GM23248 (cell line): ENCODE measurements at regions of chr1 and their contacts with region 1.

Region 1: DNA sequence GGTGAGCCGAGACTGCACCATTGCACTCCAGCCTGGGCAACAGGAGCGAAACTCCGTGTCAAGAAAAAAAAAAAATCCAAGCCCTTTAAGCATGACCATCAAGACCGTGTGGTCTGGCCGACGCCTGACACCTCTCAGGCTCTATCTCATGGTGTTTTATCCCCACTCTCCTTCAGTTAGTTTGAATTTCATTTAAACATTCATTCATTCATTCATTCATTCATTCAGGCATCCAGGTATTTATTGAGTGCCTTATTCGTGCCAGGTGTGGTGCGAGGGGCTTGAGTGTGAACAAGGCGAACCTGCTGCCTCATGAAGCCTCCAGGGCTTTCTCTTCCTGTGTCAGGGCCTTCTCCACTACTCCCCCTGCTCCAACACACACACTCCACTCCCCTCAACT is 22.6 kb upstream of the OPRD1 start:
- DNase-seq: no peak
- H3K4me3 ChIP-seq: no peak overlapping the region
- H3K27ac ChIP-seq: no peak overlapping the region
- H3K4me1 ChIP-seq: no peaks in the 10 kb centered on the region
- H3K27me3 ChIP-seq: no peaks in the 10 kb centered on the region

Region 2: GRCh38 chr1:28172713-28173150 is 616.7 kb before region 1 on chr1:
- in situ Hi-C with region 1: no loop called
- DNase-seq: no peak
- H3K4me3 ChIP-seq: no peak overlapping the region
- H3K27ac ChIP-seq: no peak overlapping the region
- H3K4me1 ChIP-seq: no peaks in the 10 kb centered on the region
- H3K27me3 ChIP-seq: no peaks in the 10 kb centered on the region

Region 3: GRCh38 chr1:28877132-28877781 is 87.8 kb after region 1 on chr1:
- in situ Hi-C with region 1: loop called (anchors 5 kb)
- DNase-seq: peak; percentile 80
- H3K4me3 ChIP-seq: no peak overlapping the region
- H3K27ac ChIP-seq: no peak overlapping the region
- H3K4me1 ChIP-seq: no peaks in the 10 kb centered on the region
- H3K27me3 ChIP-seq: no peaks in the 10 kb centered on the region

Region 4: GRCh38 chr1:28956038-28956464 is 166.6 kb after region 1 on chr1:
- in situ Hi-C with region 1: no loop called
- DNase-seq: peak; percentile 38
- H3K4me3 ChIP-seq: no peak overlapping the region
- H3K27ac ChIP-seq: no peak overlapping the region
- H3K4me1 ChIP-seq: peaks cover 6% of the 10 kb centered on the region; the same call in 1 of the 2 replicates
- H3K27me3 ChIP-seq: no peaks in the 10 kb centered on the region

Region 5: DNA sequence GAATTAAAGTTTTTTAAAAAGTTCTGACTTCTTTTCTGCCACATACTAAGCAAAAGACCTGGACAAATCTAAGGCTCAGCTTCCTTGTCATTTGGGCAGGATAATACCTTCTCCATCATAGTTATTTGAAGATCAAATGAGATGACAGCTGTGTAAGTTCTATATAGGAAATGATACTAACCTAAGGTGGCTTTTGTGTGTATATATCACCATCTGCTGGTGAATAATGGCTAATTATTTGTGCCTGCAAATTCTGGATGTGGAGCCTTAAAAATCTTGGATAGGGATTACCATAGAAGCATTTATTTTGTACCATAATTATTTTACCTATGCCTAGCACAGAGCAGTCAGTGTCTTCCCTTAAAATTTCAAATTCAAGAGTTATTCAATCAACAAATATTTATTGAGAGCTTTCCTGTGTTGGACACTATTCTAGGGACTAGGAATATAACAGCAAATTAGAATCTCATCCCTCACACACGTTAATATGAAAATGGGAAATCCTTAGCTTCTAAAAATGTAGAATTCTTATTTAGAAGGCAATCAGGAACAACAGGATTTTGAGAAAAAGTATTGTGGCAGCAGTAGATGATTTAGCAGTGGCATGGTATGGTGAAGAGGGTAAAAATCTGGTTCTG is 244.5 kb after region 1 on chr1:
- in situ Hi-C with region 1: loop called (anchors 5 kb)
- DNase-seq: peak; percentile 67
- H3K4me3 ChIP-seq: no peak overlapping the region
- H3K27ac ChIP-seq: no peak overlapping the region
- H3K4me1 ChIP-seq: no peaks in the 10 kb centered on the region
- H3K27me3 ChIP-seq: no peaks in the 10 kb centered on the region